GM12878 (cell line): ENCODE measurements at regions of chr17 and their contacts with region 1.

Region 1: DNA sequence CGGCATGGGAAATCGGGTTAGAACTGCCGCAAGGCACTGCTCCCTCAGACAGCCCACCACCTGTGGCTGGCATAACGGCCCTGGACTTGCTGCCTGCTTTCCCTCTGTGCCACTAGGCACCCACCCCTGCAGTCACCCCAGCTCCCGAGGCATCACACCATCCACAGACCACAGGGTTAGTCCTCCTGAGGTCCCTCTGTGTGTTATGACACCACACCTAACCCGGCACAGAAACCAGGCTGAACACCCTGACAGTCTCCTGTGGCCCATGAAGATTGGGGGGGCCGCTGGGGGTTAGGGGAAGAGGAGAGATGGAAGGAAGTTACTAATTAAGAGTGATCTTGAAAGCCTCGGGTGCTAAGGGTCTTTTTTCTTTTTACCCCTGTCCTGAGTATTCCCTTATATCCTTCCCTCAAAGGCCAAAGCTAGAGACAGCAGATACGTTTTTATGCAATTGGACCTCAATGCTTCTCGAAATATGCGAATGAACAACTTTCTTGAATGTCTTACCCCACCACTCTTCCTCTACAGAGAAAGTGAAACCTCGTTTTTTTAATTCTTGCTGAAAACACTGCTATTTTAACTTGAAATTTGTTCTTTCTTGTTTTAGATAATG is 7.0 kb downstream of the CYTH1 start:
- DNase-seq: no peak
- ATAC-seq: peak; percentile 69
- H3K4me3 ChIP-seq: peak overlapping the region; percentile 68
- H3K27ac ChIP-seq: peak overlapping the region; percentile 97
- H3K4me1 ChIP-seq: peaks cover 43% of the 10 kb centered on the region
- H3K27me3 ChIP-seq: no peaks in the 10 kb centered on the region
- CTCF ChIP-seq: no peak
- EP300 ChIP-seq: peak in 1 of 2 experiments; percentile 44; a peak in 2 of 4 replicates
- POLR2A ChIP-seq: peak; percentile 81
- RAD21 ChIP-seq: no peak

Region 2: DNA sequence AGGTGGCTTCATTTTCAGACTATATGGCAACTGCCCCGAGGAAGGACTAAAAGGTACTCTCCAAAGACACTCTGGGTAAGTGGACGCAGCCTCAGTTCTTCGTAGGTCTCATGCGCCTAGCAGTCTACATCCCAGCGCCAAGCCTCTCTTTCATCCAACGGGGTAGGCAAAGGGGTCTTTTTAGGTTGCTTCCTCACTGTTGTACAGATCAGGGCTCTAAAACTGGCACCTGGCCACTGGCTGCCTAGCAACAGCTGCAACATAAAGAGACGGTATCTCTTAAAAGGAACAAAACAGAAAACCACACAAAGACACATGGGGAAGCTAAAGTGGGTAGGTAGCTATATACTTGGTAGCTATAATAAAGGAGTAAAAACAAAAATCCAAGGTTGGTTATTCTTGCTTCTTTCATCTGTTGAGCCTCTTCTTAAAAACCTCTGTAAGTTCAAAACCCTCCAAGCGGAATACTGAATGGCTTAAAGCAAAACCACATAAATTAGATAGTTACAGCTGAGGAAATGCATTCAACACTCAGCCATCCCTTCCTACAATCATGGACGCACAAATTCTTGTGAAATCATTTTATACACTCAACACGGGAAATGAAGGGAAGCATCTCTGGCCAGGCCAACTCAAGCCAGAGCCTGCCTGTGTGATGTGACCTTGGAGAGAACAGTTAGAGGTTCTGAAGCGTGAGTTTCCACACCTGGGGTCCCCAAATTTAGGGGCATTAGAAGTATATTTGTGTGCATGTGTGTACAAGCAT is 15.7 kb before region 1 on chr17:
- CTCF ChIA-PET with region 1: interaction called, 9 read pairs
- POLR2A ChIA-PET with region 1: interaction called, 8 read pairs
- RAD21 ChIA-PET with region 1: interaction called, 19 read pairs
- SMC1A ChIA-PET with region 1: interaction called, 52 read pairs
- in situ Hi-C with region 1: no loop called
- intact Hi-C with region 1: no loop called
- DNase-seq: no peak
- ATAC-seq: peak; percentile 91
- H3K4me3 ChIP-seq: peak overlapping the region; percentile 57; the same call in 1 of the 2 replicates
- H3K27ac ChIP-seq: peak overlapping the region; percentile 74
- H3K4me1 ChIP-seq: peaks cover 43% of the 10 kb centered on the region
- H3K27me3 ChIP-seq: no peaks in the 10 kb centered on the region
- CTCF ChIP-seq: no peak
- EP300 ChIP-seq: peak in 1 of 2 experiments; percentile 70; a peak in 1 of 4 replicates
- POLR2A ChIP-seq: no peak
- RAD21 ChIP-seq: no peak